Activated CD4-positive, alpha-beta T cell treated with anti-CD3 and anti-CD28 coated beads, Interleukin-2, amount 10 ng/mL, durations not matched to agents 24 days and 14 days (primary cell): ENCODE measurements at regions of chr4 and their contacts with region 1.

Region 1: GRCh38 chr4:68375667-68376559 is 26.0 kb upstream of the YTHDC1 start:
- DNase-seq: peak; percentile 85
- H3K4me3 Mint-ChIP-seq: peak overlapping the region; percentile 82
- H3K27ac Mint-ChIP-seq: no peak overlapping the region
- H3K4me1 Mint-ChIP-seq: peaks cover 15% of the 10 kb centered on the region
- H3K27me3 Mint-ChIP-seq: peaks cover 32% of the 10 kb centered on the region

Region 2: DNA sequence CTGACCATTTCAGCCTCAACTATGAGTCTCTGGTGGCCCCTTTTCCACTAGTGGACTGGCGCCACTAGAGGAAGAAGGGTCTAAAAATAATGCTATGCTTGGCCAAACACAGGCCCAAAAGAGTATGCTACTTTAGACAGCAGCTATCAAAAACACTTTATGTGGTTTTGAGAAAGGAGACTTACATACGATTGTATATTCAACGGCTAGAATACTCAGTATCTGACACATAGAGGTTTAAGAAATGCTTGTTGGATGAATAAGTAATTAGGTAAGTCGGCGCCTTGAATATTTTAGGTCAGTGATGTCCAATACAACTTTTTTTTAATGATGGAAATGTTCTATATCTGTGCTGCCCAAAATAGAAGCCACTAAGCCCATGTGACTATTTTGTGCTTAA is 386.9 kb before region 1 on chr4:
- intact Hi-C with region 1: loop called (anchors 5 kb)
- DNase-seq: no peak
- H3K4me3 Mint-ChIP-seq: no peak overlapping the region
- H3K27ac Mint-ChIP-seq: no peak overlapping the region
- H3K4me1 Mint-ChIP-seq: peaks cover 7% of the 10 kb centered on the region
- H3K27me3 Mint-ChIP-seq: peaks cover 9% of the 10 kb centered on the region

Region 3: DNA sequence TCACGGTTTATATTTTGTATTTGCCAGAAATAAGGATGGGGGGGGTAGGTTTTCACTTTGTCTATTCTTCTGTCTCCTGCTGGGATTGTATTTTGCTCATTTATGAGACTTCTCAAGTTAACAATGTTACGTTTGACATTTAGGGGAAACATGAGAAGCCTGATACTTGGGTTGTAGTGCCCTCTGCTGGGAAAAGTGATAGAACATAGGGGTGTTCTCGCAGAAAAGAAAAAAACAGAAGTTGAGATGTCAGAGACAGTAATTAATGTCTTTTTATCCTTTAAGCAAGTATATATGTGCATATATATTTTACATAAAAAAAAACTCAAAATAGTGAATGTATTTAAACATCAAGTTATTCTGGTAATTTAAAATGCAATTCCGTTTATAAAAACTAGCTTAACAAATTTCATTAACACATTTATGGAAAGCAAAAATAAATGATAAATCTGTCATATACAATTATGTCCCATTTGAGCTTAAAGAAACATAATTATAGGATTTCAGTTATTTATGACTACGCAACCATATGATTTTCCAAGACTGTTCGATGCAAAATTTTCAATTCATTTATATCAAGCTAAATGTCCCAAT is 200.3 kb before region 1 on chr4:
- intact Hi-C with region 1: loop called (anchors 5 kb)
- DNase-seq: peak; percentile 83
- H3K4me3 Mint-ChIP-seq: no peak overlapping the region
- H3K27ac Mint-ChIP-seq: no peak overlapping the region
- H3K4me1 Mint-ChIP-seq: peaks cover 1% of the 10 kb centered on the region
- H3K27me3 Mint-ChIP-seq: no peaks in the 10 kb centered on the region

Region 4: DNA sequence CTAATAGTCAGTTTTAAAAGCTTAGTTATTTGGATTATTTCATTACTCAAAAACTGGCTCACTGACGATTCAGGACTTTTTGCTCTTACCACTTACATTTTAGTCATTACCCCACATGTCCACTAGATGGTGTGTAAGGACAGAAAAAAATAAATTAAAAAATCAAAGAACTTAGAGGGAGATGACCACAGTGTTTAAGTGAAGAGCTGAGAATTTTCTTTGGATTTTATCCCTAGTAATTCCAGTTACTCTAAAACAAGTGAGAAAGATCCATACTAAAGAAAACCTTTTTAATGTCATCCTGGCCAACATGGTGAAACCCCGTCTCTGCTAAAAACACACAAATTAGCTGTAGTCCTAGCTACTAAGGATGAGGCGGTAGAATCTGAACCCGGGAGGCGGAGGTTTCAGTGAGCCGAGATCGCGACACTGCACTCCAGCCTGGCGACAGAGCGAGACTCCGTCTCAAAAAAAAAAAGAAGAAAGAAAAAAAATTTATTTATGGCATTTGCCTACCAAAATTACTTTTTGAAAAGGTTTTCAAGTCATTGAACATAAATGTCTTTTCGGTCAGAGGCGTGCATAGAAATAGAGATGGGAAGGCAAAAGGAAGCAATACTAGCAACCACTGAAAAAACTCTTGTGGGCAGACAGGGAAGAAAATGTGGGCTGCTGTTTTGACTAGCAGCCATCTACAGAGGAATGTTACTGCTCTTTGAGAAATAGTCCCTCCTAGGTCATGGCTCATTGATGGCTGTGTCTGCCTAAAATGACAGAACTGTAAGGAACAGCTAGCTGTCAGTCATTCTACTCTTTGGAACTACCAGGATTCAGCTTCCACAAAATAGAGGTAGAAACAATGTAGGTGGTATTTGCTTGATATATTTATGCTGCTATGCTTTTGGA is 103.8 kb before region 1 on chr4:
- intact Hi-C with region 1: loop called (anchors 1 kb)
- DNase-seq: no peak
- H3K4me3 Mint-ChIP-seq: peak overlapping the region; percentile 55
- H3K27ac Mint-ChIP-seq: no peak overlapping the region
- H3K4me1 Mint-ChIP-seq: peaks cover 14% of the 10 kb centered on the region
- H3K27me3 Mint-ChIP-seq: peaks cover 14% of the 10 kb centered on the region

Region 5: GRCh38 chr4:68338608-68339007 is 37.3 kb before region 1 on chr4:
- intact Hi-C with region 1: loop called (anchors 5 kb)
- DNase-seq: no peak
- H3K4me3 Mint-ChIP-seq: no peak overlapping the region
- H3K27ac Mint-ChIP-seq: no peak overlapping the region
- H3K4me1 Mint-ChIP-seq: peaks cover 23% of the 10 kb centered on the region
- H3K27me3 Mint-ChIP-seq: no peaks in the 10 kb centered on the region